Calu3 (cell line): ENCODE measurements at regions of chr14 and their contacts with region 1.

Region 1: DNA sequence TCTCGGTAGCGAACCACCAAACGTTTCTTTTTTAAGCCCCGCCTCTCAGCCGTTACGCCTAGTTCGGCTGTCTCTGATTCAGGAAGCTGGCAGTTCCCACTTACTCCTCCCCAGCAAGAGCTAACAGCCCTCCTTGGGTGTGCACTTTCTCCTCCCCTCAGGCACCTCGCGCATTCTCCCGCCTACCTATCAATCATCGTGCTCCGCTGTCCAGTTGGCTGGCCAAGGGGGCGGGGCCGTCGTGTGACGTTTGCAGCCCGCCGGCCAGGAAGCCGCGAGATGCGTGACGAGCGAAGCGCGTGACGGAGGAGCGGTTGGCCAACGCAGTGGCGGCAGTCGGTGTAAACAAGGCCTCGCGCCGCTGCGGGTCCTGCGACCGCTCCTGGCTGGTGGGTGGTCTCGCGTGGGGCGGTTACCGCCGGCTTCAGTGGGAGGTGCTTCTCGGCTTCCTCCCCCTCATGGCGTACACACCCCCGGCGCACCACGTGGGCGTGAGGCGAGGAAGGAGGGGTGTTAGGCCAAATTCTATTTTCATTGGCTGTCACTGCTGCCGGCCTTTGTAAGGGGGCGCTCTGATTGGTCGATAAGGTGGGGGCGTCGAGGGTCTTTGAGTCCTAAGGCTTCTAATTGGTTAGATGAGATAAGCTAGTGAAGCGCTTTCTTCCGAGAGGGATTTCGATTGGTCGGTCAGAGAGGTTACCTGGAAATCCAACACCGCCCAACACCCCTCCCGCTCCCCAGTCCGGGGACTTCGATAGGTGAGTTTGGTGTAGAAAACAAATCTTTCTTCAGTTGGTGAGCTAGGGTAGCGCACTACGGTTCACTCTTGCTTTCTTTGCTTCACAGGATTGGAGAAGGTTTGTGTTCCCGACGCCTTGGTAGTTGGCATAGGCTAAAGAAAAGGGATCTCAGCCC is at the starts of genes DCAF11 and NRL:
- DNase-seq: peak; percentile 98
- H3K4me3 Mint-ChIP-seq: peak within 1 kb of the TSS; percentile 82
- H3K27ac Mint-ChIP-seq: peak within 1 kb of the TSS; percentile 98
- H3K4me1 Mint-ChIP-seq: peaks cover 19% of the 10 kb centered on the region
- H3K27me3 Mint-ChIP-seq: no peaks in the 10 kb centered on the region
- CTCF ChIP-seq: no peak
- total RNA-seq, gene DCAF11: 58.2 and 63.4 TPM in 2 replicates
- total RNA-seq, gene NRL: 1.8 and 2.3 TPM in 2 replicates

Region 2: GRCh38 chr14:24141097-24141880 is 26.5 kb after region 1 on chr14 and contains the start of gene EMC9:
- CTCF ChIA-PET with region 1: interaction called, 14 read pairs
- intact Hi-C with region 1: loop called (anchors 2 kb)
- DNase-seq: peak; percentile 98
- H3K4me3 Mint-ChIP-seq: peak within 1 kb of the TSS; percentile 89
- H3K27ac Mint-ChIP-seq: peak within 1 kb of the TSS; percentile 88
- H3K4me1 Mint-ChIP-seq: peaks cover 38% of the 10 kb centered on the region
- H3K27me3 Mint-ChIP-seq: no peaks in the 10 kb centered on the region
- CTCF ChIP-seq: no peak
- total RNA-seq, gene EMC9: 38.0 and 39.2 TPM in 2 replicates

Region 3: DNA sequence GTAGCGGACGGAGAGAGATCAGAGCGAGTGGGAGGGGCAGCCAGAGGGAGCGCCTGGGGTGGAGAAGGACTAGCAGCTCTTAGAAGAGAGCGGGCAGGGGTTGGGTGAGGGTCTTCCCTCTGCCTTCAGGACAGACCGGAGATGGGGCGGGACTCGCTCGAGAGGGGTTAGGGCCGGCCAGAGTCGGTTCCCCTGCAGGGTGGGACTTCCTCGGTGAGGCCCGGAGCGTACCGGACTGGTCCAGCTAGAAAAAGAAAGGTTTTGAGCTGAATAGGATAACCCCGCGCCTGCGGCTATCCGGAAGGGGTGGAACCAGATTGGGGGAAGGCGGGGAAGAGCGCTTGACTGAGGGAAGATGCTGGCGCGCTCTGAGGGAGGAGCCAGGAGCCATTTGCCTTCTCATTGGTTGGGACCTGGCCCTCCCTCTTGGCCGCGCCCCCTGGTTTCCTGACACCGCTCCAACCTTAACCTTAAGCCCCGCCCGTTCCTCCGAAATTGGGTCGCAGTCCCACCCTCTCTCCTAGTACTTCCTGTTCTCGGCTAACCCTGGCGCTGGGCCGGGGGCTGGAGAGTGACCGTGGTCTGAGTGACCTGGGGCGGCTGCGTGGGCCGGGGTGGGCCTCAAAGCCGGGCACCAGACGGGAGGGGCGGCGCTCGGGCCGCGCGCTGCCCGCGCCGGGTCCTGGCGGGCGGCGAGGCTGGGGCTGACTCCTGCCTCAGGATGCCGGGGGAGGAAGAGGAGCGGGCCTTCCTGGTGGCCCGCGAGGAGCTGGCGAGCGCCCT is 32.4 kb after region 1 on chr14 and contains the start of gene RNF31:
- CTCF ChIA-PET with region 1: interaction called, 14 read pairs
- intact Hi-C with region 1: no loop called
- DNase-seq: peak; percentile 96
- H3K4me3 Mint-ChIP-seq: peak within 1 kb of the TSS; percentile 89
- H3K27ac Mint-ChIP-seq: peak within 1 kb of the TSS; percentile 77
- H3K4me1 Mint-ChIP-seq: peaks cover 35% of the 10 kb centered on the region
- H3K27me3 Mint-ChIP-seq: no peaks in the 10 kb centered on the region
- CTCF ChIP-seq: no peak
- total RNA-seq, gene RNF31: 95.9 and 103 TPM in 2 replicates

Region 4: DNA sequence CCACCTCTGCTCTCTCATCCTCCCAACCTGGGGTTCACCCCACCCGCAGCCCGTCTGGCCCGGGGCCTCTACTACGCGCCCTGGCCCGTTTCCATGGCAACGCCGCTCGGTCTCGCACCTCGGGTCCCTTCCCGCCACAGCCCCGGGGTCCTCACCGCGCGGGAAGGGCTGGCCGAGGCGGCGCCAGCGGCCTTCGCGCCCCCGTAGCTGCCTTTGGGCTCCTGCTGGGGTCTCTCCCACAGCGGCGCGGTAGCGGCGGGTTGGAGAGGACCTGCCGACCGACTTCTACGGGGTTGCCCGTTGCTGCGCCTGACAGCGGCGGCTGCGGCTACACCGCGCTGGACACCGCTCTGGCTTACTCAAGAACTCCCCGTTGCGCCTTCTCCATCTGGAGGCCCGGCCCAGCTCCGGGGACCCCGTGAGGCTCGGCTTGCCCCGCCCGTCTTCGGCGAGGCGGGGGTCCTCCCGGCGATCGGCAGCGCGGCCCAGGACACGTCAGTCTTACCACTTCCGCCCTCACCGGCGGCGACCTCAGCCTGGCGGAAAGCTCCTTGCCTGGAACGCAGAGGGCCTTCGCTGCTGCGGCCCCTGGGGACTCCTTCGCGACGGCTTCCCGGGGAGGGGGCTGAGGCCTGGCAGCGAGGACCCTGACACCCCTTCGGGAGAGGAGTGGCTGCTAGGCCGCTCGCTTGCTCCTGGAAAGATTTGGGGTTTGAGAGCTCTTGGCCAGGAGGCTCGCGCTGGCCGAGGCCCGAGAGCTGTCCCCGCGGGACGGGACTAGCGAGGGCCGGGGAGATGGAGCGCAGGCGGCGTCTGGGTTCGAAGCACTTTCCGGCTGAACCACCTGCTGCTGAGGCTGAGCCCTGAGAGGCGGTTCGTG is 80.6 kb after region 1 on chr14 and contains the start of gene TM9SF1:
- CTCF ChIA-PET with region 1: no interaction called
- intact Hi-C with region 1: no loop called
- DNase-seq: peak; percentile 85
- H3K4me3 Mint-ChIP-seq: peak within 1 kb of the TSS; percentile 88
- H3K27ac Mint-ChIP-seq: peak within 1 kb of the TSS; percentile 92
- H3K4me1 Mint-ChIP-seq: peaks cover 8% of the 10 kb centered on the region
- H3K27me3 Mint-ChIP-seq: no peaks in the 10 kb centered on the region
- CTCF ChIP-seq: no peak
- total RNA-seq, gene TM9SF1: 68.0 and 70.9 TPM in 2 replicates

Region 5: GRCh38 chr14:24215495-24216344 is 100.9 kb after region 1 on chr14 and contains the start of gene MDP1:
- CTCF ChIA-PET with region 1: no interaction called
- intact Hi-C with region 1: no loop called
- DNase-seq: peak; percentile 80
- H3K4me3 Mint-ChIP-seq: peak within 1 kb of the TSS; percentile 81
- H3K27ac Mint-ChIP-seq: peak within 1 kb of the TSS; percentile 4
- H3K4me1 Mint-ChIP-seq: peaks cover 12% of the 10 kb centered on the region
- H3K27me3 Mint-ChIP-seq: no peaks in the 10 kb centered on the region
- CTCF ChIP-seq: no peak
- total RNA-seq, gene MDP1: 7.4 and 8.9 TPM in 2 replicates